HCT116 (cell line): ENCODE measurements at regions of chrX and their contacts with region 1.

Region 1: GRCh38 chrX:30713061-30713525 is 59.9 kb downstream of the GK start:
- DNase-seq: peak; percentile 21
- ATAC-seq: peak; percentile 76
- H3K4me3 ChIP-seq: no peak overlapping the region
- H3K27ac ChIP-seq: no peak overlapping the region
- H3K4me1 ChIP-seq: no peaks in the 10 kb centered on the region
- H3K27me3 ChIP-seq: no peaks in the 10 kb centered on the region
- CTCF ChIP-seq: peak; percentile 58 to 67 (median 64); a peak in 5 of 6 replicates
- POLR2A ChIP-seq: no peak
- RAD21 ChIP-seq: peak; percentile 66

Region 2: GRCh38 chrX:30570505-30570904 is 142.6 kb before region 1 on chrX:
- CTCF ChIA-PET with region 1: interaction called, 3 read pairs
- POLR2A ChIA-PET with region 1: no interaction called
- RAD21 ChIA-PET with region 1: no interaction called
- intact Hi-C with region 1: loop called (anchors 2 kb)
- DNase-seq: peak; percentile 2
- ATAC-seq: no peak
- H3K4me3 ChIP-seq: no peak overlapping the region
- H3K27ac ChIP-seq: no peak overlapping the region
- H3K4me1 ChIP-seq: no peaks in the 10 kb centered on the region
- H3K27me3 ChIP-seq: no peaks in the 10 kb centered on the region
- CTCF ChIP-seq: peak; percentile 14 to 34 (median 16); a peak in 3 of 6 replicates
- POLR2A ChIP-seq: no peak
- RAD21 ChIP-seq: peak; percentile 24

Region 3: GRCh38 chrX:30635630-30636029 is 77.5 kb before region 1 on chrX:
- CTCF ChIA-PET with region 1: interaction called, 5 read pairs
- POLR2A ChIA-PET with region 1: no interaction called
- RAD21 ChIA-PET with region 1: no interaction called
- intact Hi-C with region 1: loop called (anchors 1 kb)
- DNase-seq: no peak
- ATAC-seq: no peak
- H3K4me3 ChIP-seq: no peak overlapping the region
- H3K27ac ChIP-seq: no peak overlapping the region
- H3K4me1 ChIP-seq: no peaks in the 10 kb centered on the region
- H3K27me3 ChIP-seq: no peaks in the 10 kb centered on the region
- CTCF ChIP-seq: peak; percentile 26 to 36 (median 30); a peak in 4 of 6 replicates
- POLR2A ChIP-seq: no peak
- RAD21 ChIP-seq: peak; percentile 48